ENCODE measurements at regions of chr5 and their contacts with region 1.

Region 1: DNA sequence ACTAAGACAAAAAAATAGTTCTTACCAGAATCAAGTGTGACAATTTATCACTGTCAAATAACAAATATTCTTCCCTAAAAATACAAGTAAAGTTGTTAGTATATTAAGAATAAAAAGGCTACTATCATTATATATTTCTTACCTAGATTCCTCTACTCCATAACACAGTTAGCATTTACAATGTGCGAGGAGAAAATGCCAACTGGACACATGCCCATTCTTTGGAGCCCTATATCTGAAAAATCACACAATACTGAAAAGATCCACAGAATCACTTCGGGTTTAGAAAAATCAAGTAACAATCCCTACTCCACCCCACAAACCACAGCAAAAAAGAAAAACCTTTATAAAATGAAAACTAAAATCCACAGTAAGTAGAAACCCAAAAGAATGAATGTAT is 70.9 kb downstream of the PKD2L2 start:
- DNase-seq: no peak
- H3K4me3 ChIP-seq: no peak overlapping the region
- CTCF ChIP-seq: no peak
- POLR2A ChIP-seq: no peak

Region 2: GRCh38 chr5:137164961-137165360 is 795.2 kb before region 1 on chr5:
- intact Hi-C with region 1: loop called (anchors 5 kb)
- DNase-seq: no peak
- H3K4me3 ChIP-seq: no peak overlapping the region
- CTCF ChIP-seq: no peak
- POLR2A ChIP-seq: no peak

Measured in lower leg skin (tissue), 4 donors.